ENCODE measurements at regions of chr3 and their contacts with region 1.

Region 1: GRCh38 chr3:87227104-87227834 is at the start of gene CHMP2B:
- DNase-seq: peak; percentile 74 to 97
- H3K4me3 ChIP-seq: peak within 1 kb of the TSS; percentile 78 to 88
- H3K27ac ChIP-seq: peak within 1 kb of the TSS; percentile 83 to 88
- H3K4me1 ChIP-seq: peaks cover 0 to 2% of the 10 kb centered on the region in 2 donors
- H3K27me3 ChIP-seq: no peaks in the 10 kb centered on the region
- CTCF ChIP-seq: no peak
- total RNA-seq, gene CHMP2B: 27.7 TPM

Region 2: DNA sequence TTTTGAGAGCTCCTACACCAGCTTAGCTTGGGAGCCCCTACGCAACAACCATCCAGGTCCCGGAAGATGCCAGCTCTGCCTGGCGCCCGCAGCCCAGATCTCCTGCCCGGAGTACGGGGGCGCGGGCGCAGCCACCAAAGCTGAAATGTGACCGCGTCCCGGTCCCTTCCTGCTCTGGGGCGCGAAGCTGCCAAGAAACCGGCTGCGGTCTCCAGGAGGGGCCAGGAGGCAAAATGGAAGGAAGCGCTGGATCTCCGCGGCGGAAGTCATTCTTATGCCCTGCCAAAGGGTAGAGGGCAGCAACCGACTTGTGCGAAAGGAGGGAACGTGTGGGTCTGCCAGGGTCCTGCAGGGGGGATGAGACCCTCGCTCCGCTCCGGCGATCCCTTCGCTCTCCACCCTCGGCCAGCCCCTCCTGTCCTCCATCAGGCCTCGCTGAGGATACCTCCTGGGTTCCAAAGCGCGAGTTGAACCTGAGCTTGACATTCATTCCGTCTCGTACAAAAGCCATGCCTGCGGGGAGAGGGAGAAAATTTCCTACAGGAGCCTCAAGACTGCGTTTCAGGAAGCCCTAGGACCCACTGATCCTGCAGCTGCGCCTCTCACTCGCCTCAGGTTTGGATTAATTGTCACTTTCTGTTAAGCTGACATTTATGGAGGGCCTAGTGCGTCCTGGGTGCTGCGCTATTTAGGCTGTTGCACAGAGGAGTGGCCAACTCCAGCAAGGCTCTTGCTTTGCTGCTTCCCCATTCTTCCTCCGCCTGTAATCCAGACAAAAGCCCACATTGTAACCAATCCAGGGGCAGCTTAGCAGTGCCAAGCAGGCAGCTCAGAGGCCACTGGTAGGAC is 138.1 kb before region 1 on chr3:
- intact Hi-C with region 1: loop called (anchors 5 kb)
- DNase-seq: peak; percentile 11 to 88
- H3K4me3 ChIP-seq: peak overlapping the region; percentile 69 to 77
- H3K27ac ChIP-seq: peak overlapping the region; percentile 94 to 97
- H3K4me1 ChIP-seq: peaks cover 0 to 8% of the 10 kb centered on the region in 2 donors
- H3K27me3 ChIP-seq: no peaks in the 10 kb centered on the region
- CTCF ChIP-seq: no peak

Region 3: GRCh38 chr3:87120881-87121280 is 106.4 kb before region 1 on chr3:
- intact Hi-C with region 1: no loop called
- DNase-seq: no peak
- H3K4me3 ChIP-seq: no peak overlapping the region
- H3K27ac ChIP-seq: no peak overlapping the region
- H3K4me1 ChIP-seq: no peaks in the 10 kb centered on the region
- H3K27me3 ChIP-seq: no peaks in the 10 kb centered on the region
- CTCF ChIP-seq: no peak

Region 4: DNA sequence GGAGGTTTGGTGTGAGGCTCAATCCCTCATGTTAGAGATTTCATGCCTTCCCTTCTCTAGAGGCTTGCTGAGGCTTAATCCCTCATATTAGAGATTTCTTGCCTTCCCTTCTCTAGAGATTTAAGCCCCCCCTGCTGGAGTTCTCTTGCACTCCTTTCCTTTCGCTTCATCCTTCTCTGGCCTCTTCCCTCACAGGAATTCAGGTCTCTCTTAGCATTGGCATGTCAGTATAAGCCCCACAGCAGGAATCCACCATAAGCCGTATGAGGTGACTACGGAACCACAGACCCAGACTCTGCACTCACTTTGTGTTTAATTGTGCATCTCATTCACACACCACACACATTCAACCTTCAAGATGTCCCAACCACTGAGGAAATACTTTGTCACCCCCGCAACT is 387.7 kb after region 1 on chr3:
- intact Hi-C with region 1: no loop called
- DNase-seq: no peak
- H3K4me3 ChIP-seq: no peak overlapping the region
- H3K27ac ChIP-seq: no peak overlapping the region
- H3K4me1 ChIP-seq: no peaks in the 10 kb centered on the region
- H3K27me3 ChIP-seq: no peaks in the 10 kb centered on the region
- CTCF ChIP-seq: no peak

Measured in ascending aorta (tissue), 2 donors.